GM12878 (cell line): ENCODE measurements at regions of chr2 and their contacts with region 1.

Region 1: DNA sequence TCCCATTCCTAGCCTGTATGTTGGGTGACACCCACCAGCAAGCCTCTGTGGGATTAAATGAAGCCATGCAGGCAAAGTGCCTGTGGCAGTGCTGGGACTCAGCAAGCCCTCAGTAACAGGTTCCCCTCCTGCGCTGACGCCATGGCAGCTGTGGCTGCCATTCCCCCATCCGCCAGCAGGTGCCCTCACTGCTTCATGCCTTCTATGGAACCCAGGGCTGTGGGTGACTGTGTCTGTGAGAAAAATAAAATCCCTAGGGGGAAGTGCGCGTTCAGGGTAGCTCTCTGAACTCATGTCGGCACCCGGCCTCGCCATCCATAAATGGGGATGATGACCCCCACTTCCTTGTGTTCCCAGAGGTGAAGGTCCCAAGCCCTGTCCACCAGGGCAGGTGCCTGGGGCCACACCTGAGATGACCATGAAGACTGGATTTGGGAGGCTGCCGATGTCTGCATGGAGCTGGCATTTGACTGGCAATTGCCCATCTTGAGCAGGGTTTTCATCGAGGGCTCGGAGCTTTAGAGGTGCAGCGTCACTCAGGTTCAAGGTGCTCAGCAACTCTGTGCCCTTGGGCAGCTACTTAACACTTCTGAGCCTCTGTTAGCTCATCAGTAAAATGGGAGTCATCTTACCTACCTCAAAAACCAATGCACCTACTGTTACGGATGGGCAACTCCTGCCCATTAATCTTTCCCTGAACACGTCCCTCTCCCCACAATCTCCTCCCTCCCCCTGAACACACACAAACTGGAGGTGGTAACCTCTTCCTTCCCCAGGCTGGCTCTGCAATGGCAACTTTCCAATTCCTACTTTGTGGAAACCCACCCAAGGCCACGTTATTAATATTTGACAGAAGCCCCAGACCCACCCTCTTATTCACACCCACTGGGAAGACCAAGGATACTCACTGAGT is 2.9 kb upstream of the MAL start:
- DNase-seq: peak; percentile 69
- ATAC-seq: peak; percentile 88
- H3K4me3 ChIP-seq: no peak overlapping the region
- H3K27ac ChIP-seq: no peak overlapping the region
- H3K4me1 ChIP-seq: peaks cover 6% of the 10 kb centered on the region
- H3K27me3 ChIP-seq: peaks cover 0 to 2% of the 10 kb centered on the region in 2 experiments; a peak in 3 of 4 replicates
- CTCF ChIP-seq: peak; percentile 97 to 99 (median 99); a peak in 5 of 6 replicates
- EP300 ChIP-seq: no peak
- POLR2A ChIP-seq: no peak
- RAD21 ChIP-seq: peak; percentile 93

Region 2: DNA sequence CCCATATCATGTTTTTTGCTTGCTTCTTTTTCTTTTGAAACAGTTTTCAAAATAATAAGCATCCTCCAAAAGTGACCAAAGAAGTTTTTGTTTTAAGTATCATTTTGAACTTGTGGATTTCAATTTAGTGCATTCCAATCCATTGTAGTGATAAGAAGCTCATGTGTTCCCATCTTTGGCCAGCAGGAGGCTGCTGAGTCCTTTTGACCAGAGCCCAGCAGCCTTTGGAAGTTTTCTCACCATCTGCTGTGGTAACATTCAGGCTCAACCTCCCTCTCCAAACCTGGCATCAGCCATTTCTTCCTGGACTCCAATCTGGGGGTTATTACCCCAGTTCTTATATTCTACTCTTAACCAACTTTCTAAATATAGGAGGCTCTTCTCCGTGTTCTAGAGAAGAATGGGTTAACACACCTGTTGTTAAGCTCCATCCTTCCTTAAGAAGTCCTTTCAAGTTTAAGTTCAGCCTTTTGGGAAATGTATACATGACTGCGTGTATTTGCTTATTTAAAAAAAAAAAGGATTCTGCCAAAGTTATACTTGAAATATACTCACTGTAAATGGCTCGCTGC is 36.1 kb before region 1 on chr2:
- CTCF ChIA-PET with region 1: interaction called, 19 read pairs
- POLR2A ChIA-PET with region 1: no interaction called
- RAD21 ChIA-PET with region 1: interaction called, 4 read pairs
- SMC1A ChIA-PET with region 1: interaction called, 4 read pairs
- in situ Hi-C with region 1: no loop called
- intact Hi-C with region 1: no loop called
- DNase-seq: peak; percentile 2
- ATAC-seq: peak; percentile 94
- H3K4me3 ChIP-seq: no peak overlapping the region
- H3K27ac ChIP-seq: no peak overlapping the region
- H3K4me1 ChIP-seq: no peaks in the 10 kb centered on the region
- H3K27me3 ChIP-seq: no peaks in the 10 kb centered on the region; a peak in 1 of 4 replicates
- CTCF ChIP-seq: peak; percentile 69 to 80 (median 75)
- EP300 ChIP-seq: no peak
- POLR2A ChIP-seq: no peak
- RAD21 ChIP-seq: peak; percentile 60

Region 3: GRCh38 chr2:95034221-95034620 is 11.7 kb after region 1 on chr2:
- CTCF ChIA-PET with region 1: interaction called, 19 read pairs
- POLR2A ChIA-PET with region 1: no interaction called
- RAD21 ChIA-PET with region 1: interaction called, 61 read pairs
- SMC1A ChIA-PET with region 1: interaction called, 5 read pairs
- in situ Hi-C with region 1: no loop called
- intact Hi-C with region 1: no loop called
- DNase-seq: no peak
- ATAC-seq: no peak
- H3K4me3 ChIP-seq: no peak overlapping the region
- H3K27ac ChIP-seq: no peak overlapping the region
- H3K4me1 ChIP-seq: peaks cover 7% of the 10 kb centered on the region
- H3K27me3 ChIP-seq: no peaks in the 10 kb centered on the region
- CTCF ChIP-seq: no peak
- EP300 ChIP-seq: no peak
- POLR2A ChIP-seq: no peak
- RAD21 ChIP-seq: no peak

Region 4: DNA sequence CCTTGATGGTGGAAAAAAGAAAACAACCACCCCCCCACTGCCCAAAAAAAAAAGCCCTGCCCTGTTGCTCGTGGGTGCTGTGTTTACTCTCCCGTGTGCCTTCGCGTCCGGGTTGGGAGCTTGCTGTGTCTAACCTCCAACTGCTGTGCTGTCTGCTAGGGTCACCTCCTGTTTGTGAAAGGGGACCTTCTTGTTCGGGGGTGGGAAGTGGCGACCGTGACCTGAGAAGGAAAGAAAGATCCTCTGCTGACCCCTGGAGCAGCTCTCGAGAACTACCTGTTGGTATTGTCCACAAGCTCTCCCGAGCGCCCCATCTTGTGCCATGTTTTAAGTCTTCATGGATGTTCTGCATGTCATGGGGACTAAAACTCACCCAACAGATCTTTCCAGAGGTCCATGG is 31.0 kb after region 1 on chr2:
- CTCF ChIA-PET with region 1: interaction called, 134 read pairs
- POLR2A ChIA-PET with region 1: interaction called, 15 read pairs
- RAD21 ChIA-PET with region 1: interaction called, 92 read pairs
- SMC1A ChIA-PET with region 1: interaction called, 94 read pairs
- in situ Hi-C with region 1: no loop called
- intact Hi-C with region 1: loop called (anchors 1 kb)
- DNase-seq: no peak
- ATAC-seq: peak; percentile 25; the same call in 2 of the 3 replicates
- H3K4me3 ChIP-seq: no peak overlapping the region
- H3K27ac ChIP-seq: no peak overlapping the region
- H3K4me1 ChIP-seq: peaks cover 26% of the 10 kb centered on the region
- H3K27me3 ChIP-seq: no peaks in the 10 kb centered on the region
- CTCF ChIP-seq: peak; percentile 23 to 54 (median 35); a peak in 4 of 6 replicates
- EP300 ChIP-seq: no peak
- POLR2A ChIP-seq: no peak
- RAD21 ChIP-seq: peak; percentile 72

Region 5: GRCh38 chr2:95076784-95077529 is 54.4 kb after region 1 on chr2:
- CTCF ChIA-PET with region 1: interaction called, 339 read pairs
- POLR2A ChIA-PET with region 1: interaction called, 7 read pairs
- RAD21 ChIA-PET with region 1: interaction called, 120 read pairs
- SMC1A ChIA-PET with region 1: interaction called, 66 read pairs
- in situ Hi-C with region 1: loop called (anchors 5 kb)
- intact Hi-C with region 1: loop called (anchors 1 kb)
- DNase-seq: no peak
- ATAC-seq: peak; percentile 93
- H3K4me3 ChIP-seq: peak overlapping the region; percentile 28; the same call in 1 of the 2 replicates
- H3K27ac ChIP-seq: no peak overlapping the region
- H3K4me1 ChIP-seq: peaks cover 14% of the 10 kb centered on the region
- H3K27me3 ChIP-seq: no peaks in the 10 kb centered on the region; a peak in 2 of 4 replicates
- CTCF ChIP-seq: peak; percentile 76 to 91 (median 84)
- EP300 ChIP-seq: no peak
- POLR2A ChIP-seq: peak; percentile 30; the same call in 1 of the 2 replicates
- RAD21 ChIP-seq: peak; percentile 56

Region 6: DNA sequence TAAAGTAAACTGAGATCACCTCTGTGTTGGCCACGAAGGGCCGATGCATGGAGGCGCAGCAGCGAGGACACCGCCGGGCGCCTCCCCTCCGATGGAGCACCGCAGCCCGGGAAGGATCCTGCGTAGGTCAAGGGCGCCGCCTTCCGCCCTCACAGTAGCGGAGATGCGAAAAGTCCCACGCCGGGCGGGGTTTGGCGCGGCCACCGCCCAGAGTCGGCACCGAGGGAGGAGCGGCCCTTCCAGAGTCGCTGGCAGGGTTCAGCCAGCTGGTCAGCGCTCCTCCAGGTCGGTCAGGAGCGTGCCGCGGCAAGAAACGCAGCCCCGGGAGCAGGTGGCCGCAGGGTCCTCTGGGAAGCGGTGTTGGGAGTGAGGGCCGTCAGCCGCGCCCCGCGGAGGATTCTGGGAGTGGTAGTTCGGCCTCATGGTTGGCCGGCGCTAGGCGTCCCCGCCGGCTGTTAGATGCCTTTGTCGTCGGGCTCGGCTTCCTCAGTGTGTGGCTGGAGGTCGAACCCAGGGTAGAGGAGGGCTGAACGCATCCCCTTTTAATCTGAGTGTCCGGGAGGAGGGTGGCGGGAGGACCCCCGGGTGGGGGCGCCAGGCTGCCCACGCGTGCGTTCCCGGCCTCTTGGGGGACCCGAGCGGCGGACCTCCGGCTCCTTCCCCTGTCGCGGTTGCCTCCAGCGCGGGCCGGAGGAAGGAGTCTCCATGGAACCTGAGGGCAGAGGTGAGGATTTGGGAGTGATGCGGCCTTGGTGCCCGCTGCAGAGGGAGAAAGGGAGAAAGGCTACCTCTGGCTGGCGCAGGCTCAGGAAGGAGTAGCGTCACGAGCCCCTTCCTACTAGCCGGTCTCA is 184.8 kb after region 1 on chr2 and contains the start of gene ZNF892:
- CTCF ChIA-PET with region 1: interaction called, 7 read pairs
- POLR2A ChIA-PET with region 1: no interaction called
- RAD21 ChIA-PET with region 1: no interaction called
- SMC1A ChIA-PET with region 1: no interaction called
- in situ Hi-C with region 1: no loop called
- intact Hi-C with region 1: loop called (anchors 10 kb)
- DNase-seq: peak; percentile 45
- ATAC-seq: peak; percentile 98
- H3K4me3 ChIP-seq: peak within 1 kb of the TSS; percentile 79
- H3K27ac ChIP-seq: peak within 1 kb of the TSS; percentile 30; the same call in 1 of the 2 replicates
- H3K4me1 ChIP-seq: no peaks in the 10 kb centered on the region
- H3K27me3 ChIP-seq: no peaks in the 10 kb centered on the region
- CTCF ChIP-seq: peak; percentile 52 to 77 (median 58); a peak in 5 of 6 replicates
- EP300 ChIP-seq: no peak
- POLR2A ChIP-seq: peak; percentile 69
- RAD21 ChIP-seq: peak; percentile 57
- polyA plus RNA-seq, gene ZNF892: not detected

Region 7: GRCh38 chr2:95296880-95297487 is 274.4 kb after region 1 on chr2 and contains the start of gene KCNIP3:
- CTCF ChIA-PET with region 1: no interaction called
- POLR2A ChIA-PET with region 1: no interaction called
- RAD21 ChIA-PET with region 1: no interaction called
- SMC1A ChIA-PET with region 1: no interaction called
- in situ Hi-C with region 1: no loop called
- intact Hi-C with region 1: no loop called
- DNase-seq: no peak
- ATAC-seq: no peak
- H3K4me3 ChIP-seq: no peak within 1 kb of the TSS
- H3K27ac ChIP-seq: no peak within 1 kb of the TSS
- H3K4me1 ChIP-seq: no peaks in the 10 kb centered on the region
- H3K27me3 ChIP-seq: no peaks in the 10 kb centered on the region
- CTCF ChIP-seq: no peak
- EP300 ChIP-seq: no peak
- POLR2A ChIP-seq: no peak
- RAD21 ChIP-seq: no peak
- polyA plus RNA-seq, gene KCNIP3: not detected